A673 (cell line): ENCODE measurements at regions of chr12 and their contacts with region 1.

Region 1: GRCh38 chr12:31991815-31992214 is 32.6 kb downstream of the RESF1 start:
- DNase-seq: no peak
- H3K4me3 ChIP-seq: no peak overlapping the region
- H3K27ac ChIP-seq: no peak overlapping the region
- H3K4me1 ChIP-seq: no peaks in the 10 kb centered on the region
- H3K27me3 ChIP-seq: no peaks in the 10 kb centered on the region
- CTCF ChIP-seq: no peak

Region 2: DNA sequence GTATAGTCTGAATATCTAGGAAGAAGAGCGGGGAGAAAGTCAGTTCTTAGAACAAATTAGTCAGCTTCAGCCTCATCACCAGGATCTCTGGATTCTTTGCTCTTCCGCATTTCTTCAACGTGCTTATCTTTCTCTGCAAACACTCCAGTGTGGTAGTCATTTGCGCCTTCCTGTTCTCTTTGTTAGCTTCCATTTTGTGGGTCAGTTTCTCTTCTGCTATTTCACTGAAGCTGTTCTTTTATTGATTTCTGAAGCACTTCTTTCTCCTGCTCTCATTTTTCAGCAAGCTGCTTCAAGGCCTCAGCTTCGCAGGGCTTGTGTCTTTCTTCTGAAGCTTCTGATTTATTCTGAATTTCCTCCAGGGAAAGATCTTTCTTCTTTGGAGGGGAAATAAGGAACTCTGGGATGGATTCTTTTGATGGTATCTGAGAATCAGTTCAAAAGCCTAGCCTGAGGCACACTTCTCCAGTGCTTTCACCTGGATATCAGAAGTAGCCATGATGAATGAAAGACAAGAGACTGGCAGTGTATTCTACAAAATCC is 276.5 kb before region 1 on chr12:
- CTCF ChIA-PET with region 1: no interaction called
- POLR2A ChIA-PET with region 1: no interaction called
- intact Hi-C with region 1: no loop called
- DNase-seq: no peak
- H3K4me3 ChIP-seq: no peak overlapping the region
- H3K27ac ChIP-seq: peak overlapping the region; percentile 19
- H3K4me1 ChIP-seq: no peaks in the 10 kb centered on the region
- H3K27me3 ChIP-seq: no peaks in the 10 kb centered on the region
- CTCF ChIP-seq: no peak

Region 3: GRCh38 chr12:31922341-31923062 is 69.3 kb before region 1 on chr12:
- CTCF ChIA-PET with region 1: no interaction called
- POLR2A ChIA-PET with region 1: interaction called, 16 read pairs
- intact Hi-C with region 1: no loop called
- DNase-seq: peak; percentile 37
- H3K4me3 ChIP-seq: no peak overlapping the region
- H3K27ac ChIP-seq: no peak overlapping the region
- H3K4me1 ChIP-seq: no peaks in the 10 kb centered on the region
- H3K27me3 ChIP-seq: no peaks in the 10 kb centered on the region
- CTCF ChIP-seq: no peak